CD14-positive monocyte (primary cell): ENCODE measurements at regions of chr6 and their contacts with region 1.

Region 1: GRCh38 chr6:170529839-170530469 is 23.2 kb downstream of the PSMB1 start:
- DNase-seq: peak; percentile 23 to 53 (median 53)
- H3K4me3 ChIP-seq: no peak overlapping the region
- H3K4me3 Mint-ChIP-seq: no peak overlapping the region
- H3K27ac ChIP-seq: no peak overlapping the region
- H3K27ac Mint-ChIP-seq: no peak overlapping the region
- H3K4me1 ChIP-seq: no peaks in the 10 kb centered on the region
- H3K4me1 Mint-ChIP-seq: no peaks in the 10 kb centered on the region
- H3K27me3 ChIP-seq: no peaks in the 10 kb centered on the region
- H3K27me3 Mint-ChIP-seq: no peaks in the 10 kb centered on the region
- CTCF ChIP-seq: peak; percentile 84

Region 2: DNA sequence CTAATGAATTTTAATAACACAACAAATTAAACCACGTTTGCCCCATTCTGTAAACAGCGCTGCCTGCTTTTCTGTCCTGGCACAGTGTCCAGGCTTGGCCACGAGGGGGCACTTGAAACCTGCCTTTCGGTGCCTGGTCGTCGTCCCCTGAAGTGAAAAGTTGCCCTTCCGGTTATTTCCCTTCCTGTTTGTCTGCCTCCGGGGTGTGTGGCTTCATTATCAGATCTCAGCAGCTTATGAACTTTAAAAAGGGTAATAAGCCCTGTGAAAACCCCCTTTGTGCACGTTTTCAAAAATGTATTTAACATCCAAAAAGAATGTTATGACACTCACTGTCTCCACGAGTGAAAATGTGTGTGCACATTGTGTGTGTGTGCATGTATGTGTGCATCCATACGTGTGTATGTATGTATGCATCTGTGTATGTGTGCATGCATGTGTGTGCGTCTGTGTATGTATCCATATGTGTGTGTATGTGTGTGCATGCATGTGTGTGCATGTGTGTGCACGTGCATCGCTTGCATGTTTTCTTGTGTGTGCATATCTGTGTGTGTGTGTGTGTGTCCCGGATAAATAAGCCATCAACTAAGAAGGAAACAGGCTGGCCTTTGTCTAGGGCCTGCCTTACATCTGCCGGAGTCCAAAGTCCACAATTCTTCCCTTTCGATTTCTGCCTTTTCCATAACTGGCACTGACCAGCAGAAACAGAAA is 1634.7 kb before region 1 on chr6:
- intact Hi-C with region 1: loop called (anchors 5 to 10 kb)
- DNase-seq: peak; percentile 38 to 52 (median 52)
- H3K4me3 ChIP-seq: peak overlapping the region in 2 of 3 experiments; percentile 4 to 58
- H3K4me3 Mint-ChIP-seq: peak overlapping the region in 1 of 2 donors; percentile 81
- H3K27ac ChIP-seq: no peak overlapping the region
- H3K27ac Mint-ChIP-seq: peak overlapping the region in 2 of 7 donors; percentile 21 to 37
- H3K4me1 ChIP-seq: peaks cover 3 to 4% of the 10 kb centered on the region in 2 donors
- H3K4me1 Mint-ChIP-seq: peaks cover 5% of the 10 kb centered on the region
- H3K27me3 ChIP-seq: no peaks in the 10 kb centered on the region
- H3K27me3 Mint-ChIP-seq: peaks cover 3 to 4% (median 3%) of the 10 kb centered on the region in 3 donors
- CTCF ChIP-seq: peak; percentile 85

Region 3: DNA sequence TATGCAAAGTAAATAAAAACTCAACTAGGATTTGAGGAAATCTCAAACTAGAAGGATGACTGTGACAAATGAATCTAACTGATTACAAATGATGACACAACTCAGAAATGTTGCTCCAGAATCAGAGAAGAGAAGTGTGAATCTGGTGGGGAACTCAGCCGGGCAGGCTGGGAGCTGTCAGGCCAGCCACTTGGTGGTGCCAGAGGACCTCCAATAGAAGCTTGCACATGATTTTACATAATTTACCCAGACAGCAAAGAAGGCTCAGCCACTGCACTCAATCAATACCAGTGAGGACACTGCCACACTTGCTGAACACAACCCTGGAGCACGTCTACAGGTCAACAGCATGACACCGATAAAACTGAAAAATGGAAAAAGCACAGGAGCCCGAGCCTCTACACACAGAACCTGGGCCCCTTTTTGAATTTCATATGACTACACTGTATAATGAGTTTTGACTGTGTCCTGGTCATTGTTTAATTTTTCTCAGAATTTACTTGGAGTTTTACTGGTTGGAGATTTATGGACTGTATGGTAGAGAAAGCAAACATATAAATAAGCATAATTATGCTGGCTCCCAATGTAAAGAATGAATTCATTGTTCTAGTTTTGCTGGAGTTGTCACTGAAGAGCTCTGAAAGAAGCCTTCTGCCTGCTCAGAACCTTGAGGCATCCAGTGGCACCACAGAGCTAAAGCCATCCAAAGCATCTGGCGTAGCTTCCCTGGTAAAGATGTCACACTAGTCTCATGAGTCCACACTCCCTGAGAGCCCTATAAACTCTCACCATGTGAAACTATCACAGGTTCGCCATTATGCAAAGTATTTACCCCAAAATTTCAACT is 1572.8 kb before region 1 on chr6:
- intact Hi-C with region 1: loop called in 1 of 2 experiments (anchors 10 kb)
- DNase-seq: peak; percentile 24 to 52 (median 32)
- H3K4me3 ChIP-seq: no peak overlapping the region
- H3K4me3 Mint-ChIP-seq: no peak overlapping the region
- H3K27ac ChIP-seq: no peak overlapping the region
- H3K27ac Mint-ChIP-seq: no peak overlapping the region
- H3K4me1 ChIP-seq: no peaks in the 10 kb centered on the region
- H3K4me1 Mint-ChIP-seq: no peaks in the 10 kb centered on the region
- H3K27me3 ChIP-seq: peaks cover 0 to 2% of the 10 kb centered on the region in 2 donors
- H3K27me3 Mint-ChIP-seq: peaks cover 0 to 6% (median 5%) of the 10 kb centered on the region in 3 donors
- CTCF ChIP-seq: peak; percentile 74

Region 4: DNA sequence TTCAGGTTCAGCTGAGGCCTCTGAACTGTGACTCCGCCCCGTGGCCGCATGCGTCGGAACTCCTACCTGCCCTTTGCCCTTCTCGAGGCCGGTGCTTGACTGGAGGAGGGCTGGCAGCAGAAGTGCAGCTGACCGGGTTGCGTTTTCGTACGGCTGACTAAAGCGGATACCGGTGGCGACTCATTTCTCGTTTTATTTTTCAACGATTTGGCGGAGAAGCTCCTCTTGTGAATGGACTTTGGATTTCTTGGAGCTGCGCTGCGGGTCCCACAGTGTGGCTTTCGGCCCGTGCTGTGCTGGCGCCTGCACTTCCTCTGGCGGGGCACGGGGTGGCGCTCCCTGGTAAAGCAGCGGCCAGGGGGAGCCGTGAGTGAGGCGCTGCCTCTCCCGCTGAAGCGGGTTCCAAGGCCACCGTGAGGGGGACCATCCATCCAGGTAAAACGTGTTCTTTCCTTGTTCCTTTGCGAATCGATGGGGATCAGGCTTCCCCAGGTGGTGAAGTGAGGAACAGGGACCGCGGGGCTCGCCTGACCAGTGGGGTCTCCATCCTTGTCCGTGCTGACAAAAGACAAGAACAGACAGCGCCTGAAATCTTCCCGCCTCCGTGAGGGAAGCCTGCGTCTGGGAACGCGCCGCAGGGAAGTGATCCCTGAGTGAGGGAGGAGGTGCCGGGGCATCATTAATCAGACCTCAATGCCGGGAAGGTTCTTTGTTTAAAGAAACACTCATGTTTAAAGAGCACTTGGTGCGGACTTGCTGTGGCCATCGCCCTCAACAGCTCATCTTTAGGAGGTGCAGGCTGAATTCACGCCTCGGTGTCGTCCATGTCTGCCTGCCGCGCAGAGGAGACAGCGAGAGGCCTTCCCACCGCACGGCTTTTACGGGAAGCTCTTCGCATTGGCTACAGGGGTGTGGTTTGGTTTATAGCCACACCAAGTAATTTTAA is 739.7 kb before region 1 on chr6:
- intact Hi-C with region 1: loop called in 1 of 2 experiments (anchors 5 kb)
- DNase-seq: peak; percentile 37 to 53 (median 40)
- H3K4me3 ChIP-seq: peak overlapping the region; percentile 16 to 75 (median 36)
- H3K4me3 Mint-ChIP-seq: peak overlapping the region; percentile 79 to 93
- H3K27ac ChIP-seq: no peak overlapping the region
- H3K27ac Mint-ChIP-seq: peak overlapping the region in 1 of 7 donors; percentile 26
- H3K4me1 ChIP-seq: peaks cover 12 to 16% of the 10 kb centered on the region in 2 donors
- H3K4me1 Mint-ChIP-seq: peaks cover 20% of the 10 kb centered on the region
- H3K27me3 ChIP-seq: peaks cover 0 to 22% of the 10 kb centered on the region in 2 donors
- H3K27me3 Mint-ChIP-seq: peaks cover 20 to 35% (median 32%) of the 10 kb centered on the region in 3 donors
- CTCF ChIP-seq: peak; percentile 96

Region 5: GRCh38 chr6:169831450-169832246 is 698.3 kb before region 1 on chr6:
- intact Hi-C with region 1: loop called (anchors 2 to 5 kb)
- DNase-seq: peak; percentile 29 to 57 (median 42)
- H3K4me3 ChIP-seq: no peak overlapping the region
- H3K4me3 Mint-ChIP-seq: no peak overlapping the region
- H3K27ac ChIP-seq: no peak overlapping the region
- H3K27ac Mint-ChIP-seq: no peak overlapping the region
- H3K4me1 ChIP-seq: peaks cover 0 to 3% of the 10 kb centered on the region in 2 donors
- H3K4me1 Mint-ChIP-seq: peaks cover 1% of the 10 kb centered on the region
- H3K27me3 ChIP-seq: peaks cover 0 to 4% of the 10 kb centered on the region in 2 donors
- H3K27me3 Mint-ChIP-seq: peaks cover 2 to 13% (median 6%) of the 10 kb centered on the region in 3 donors
- CTCF ChIP-seq: peak; percentile 93

Region 6: GRCh38 chr6:169959136-169960002 is 570.6 kb before region 1 on chr6:
- intact Hi-C with region 1: loop called in 1 of 2 experiments (anchors 10 kb)
- DNase-seq: peak; percentile 30 to 70 (median 51)
- H3K4me3 ChIP-seq: peak overlapping the region in 2 of 3 experiments; percentile 35 to 56
- H3K4me3 Mint-ChIP-seq: peak overlapping the region; percentile 70 to 80
- H3K27ac ChIP-seq: no peak overlapping the region
- H3K27ac Mint-ChIP-seq: peak overlapping the region in 5 of 7 donors; percentile 10 to 82 (median 71)
- H3K4me1 ChIP-seq: peaks cover 42 to 47% of the 10 kb centered on the region in 2 donors
- H3K4me1 Mint-ChIP-seq: peaks cover 56% of the 10 kb centered on the region
- H3K27me3 ChIP-seq: peaks cover 0 to 15% of the 10 kb centered on the region in 2 donors
- H3K27me3 Mint-ChIP-seq: peaks cover 11 to 23% (median 18%) of the 10 kb centered on the region in 3 donors
- CTCF ChIP-seq: no peak